ENCODE measurements at regions of chr5 and their contacts with region 1.

Region 1: DNA sequence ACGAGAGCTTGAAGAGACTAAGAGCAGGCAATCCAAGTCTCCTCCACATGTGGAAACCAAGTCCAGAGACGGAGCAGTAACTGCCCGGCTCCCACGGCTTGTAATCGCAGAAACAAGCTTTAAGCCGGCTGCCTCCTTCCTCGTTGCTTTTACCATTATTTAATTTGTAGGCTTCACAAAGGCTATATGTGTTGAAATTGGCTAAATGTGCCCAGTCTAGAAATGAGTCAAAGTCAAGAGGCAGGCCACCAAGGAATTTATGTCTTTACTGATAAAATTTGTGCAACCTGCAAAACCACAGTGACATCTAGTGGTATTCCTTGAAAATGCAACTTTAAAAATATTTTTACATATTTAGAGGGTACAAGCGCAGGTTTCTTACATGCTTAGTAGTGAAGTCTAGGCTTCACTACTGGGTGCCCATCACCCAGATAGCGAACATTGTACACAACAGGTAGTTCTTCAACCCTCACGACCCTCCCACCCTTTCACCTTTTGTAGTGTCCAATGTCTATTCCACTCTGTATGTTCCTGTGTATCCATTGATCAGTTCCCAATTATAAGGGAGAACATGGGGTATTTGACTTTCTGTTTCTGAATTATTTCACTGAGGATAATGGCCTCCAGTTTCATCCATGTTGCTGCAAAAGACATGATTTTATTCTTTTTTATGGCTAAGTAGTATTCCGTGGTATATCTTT is 33.5 kb upstream of the EBF1 start:
- DNase-seq: no peak
- ATAC-seq: peak; percentile 78 to 89

Region 2: DNA sequence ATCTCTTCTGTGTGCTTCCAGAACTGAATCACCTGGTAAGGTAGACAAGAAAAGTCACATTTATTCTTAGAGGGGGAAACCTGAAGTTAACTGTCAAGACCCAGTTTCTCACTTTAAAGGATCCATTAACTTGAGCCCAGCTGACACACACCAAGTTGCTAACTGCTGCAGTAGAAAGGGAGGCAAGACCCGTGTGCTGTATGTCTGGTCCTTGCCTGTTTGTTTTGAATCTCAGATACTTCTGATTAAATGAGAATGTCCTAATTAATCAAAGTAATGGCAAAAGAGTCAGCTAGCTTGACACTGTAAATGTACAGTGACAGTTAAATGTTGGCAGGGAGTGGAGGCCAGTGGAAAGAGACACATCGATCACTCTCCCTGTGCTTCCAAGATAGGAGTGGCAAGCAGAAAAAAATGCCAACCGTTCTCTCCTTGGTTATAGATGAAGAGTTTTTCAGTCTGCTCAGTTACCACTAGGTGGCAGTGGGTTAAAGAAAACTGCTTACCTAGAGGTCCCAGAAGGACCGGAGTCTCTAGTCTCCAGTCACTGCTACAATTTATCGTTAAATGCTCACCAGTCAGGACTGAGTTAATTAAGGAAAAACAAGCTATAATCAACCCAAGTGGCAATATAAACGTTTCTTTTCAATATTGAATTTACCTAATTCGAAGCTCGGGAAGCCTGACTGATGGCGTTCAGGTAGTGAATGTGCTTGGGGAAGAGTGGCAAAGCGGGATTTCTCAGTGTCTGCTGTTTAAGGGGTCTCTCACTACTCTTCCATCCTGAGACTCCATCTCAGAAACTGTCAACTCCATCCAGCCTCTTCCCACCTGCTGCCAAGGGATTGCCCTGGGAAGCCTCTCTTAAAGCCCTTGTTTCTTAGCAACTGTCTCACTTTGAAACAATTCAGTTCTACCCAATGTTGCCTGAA is 1371.2 kb before region 1 on chr5:
- intact Hi-C with region 1: loop called in 1 of 2 experiments (anchors 5 kb)
- DNase-seq: no peak
- ATAC-seq: peak; percentile 78 to 86

Region 3: DNA sequence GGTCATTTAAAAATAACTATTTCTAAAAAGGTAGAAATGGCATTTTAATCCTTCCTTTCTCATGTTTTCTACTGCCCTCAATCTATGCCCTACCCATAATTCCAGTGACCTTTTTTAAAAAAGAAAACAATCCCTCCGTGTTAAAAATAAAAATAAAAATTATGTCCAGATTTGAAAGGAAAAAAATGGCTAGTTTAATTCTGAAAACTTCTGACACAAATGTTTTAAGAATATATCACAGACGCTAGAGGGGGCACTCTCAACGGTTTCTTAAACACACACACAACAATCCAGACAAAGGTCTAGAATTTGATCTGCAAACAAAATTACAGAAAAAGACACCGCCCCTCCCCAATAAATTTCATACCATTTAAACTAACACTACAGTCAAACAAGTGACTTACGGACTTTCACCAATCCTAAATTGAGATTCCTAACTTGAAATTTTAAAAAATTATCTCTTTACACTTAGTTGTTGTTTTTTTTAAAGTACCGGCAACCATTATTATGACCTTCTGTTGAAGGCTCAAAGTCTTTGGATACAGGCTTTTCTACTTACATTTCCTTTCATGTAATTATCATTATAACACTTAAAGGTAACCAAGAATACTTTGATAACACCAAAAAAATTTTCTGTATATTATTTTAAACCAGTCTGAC is 1312.5 kb before region 1 on chr5:
- intact Hi-C with region 1: loop called in 1 of 2 experiments (anchors 10 kb)
- DNase-seq: no peak
- ATAC-seq: no peak

Region 4: GRCh38 chr5:158174918-158175851 is 958.0 kb before region 1 on chr5:
- intact Hi-C with region 1: loop called in 1 of 2 experiments (anchors 5 kb)
- DNase-seq: peak; percentile 73
- ATAC-seq: peak; percentile 89 to 93

Region 5: GRCh38 chr5:158695595-158696330 is 437.4 kb before region 1 on chr5:
- intact Hi-C with region 1: loop called in 1 of 2 experiments (anchors 10 kb)
- DNase-seq: peak; percentile 71
- ATAC-seq: peak; percentile 65 to 86

Region 6: DNA sequence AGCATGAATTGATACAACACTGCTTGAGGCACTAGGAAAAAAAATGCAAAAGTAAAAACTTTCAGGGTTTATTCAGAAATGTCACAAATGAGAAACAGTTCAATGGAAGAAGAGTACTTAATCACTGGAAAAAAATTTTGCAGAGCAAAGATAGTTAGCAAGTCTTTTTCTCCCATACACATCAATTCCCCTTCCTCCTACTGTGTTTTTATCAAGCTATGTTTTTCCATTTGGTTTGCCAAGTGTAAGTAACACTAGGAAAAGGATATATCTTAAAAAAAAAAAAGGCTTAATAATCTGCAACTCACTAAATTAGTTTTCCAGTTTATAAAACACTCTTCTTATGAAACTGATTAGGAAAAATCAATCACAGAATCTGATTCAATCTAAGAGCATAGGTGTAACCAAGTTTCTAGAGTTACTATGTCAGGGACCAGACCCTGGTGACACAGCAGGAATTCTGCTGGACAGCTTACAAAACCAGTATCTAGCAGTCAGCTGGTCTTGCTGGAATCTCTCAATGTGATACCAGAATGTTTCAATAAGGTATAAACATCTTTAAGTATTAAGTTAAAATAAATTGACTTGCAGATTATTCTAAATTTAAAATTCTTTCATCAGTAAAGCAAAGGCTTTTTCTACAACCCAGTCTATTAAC is 41.4 kb after region 1 on chr5:
- intact Hi-C with region 1: no loop called
- DNase-seq: no peak
- ATAC-seq: peak; percentile 45 to 53

Region 7: DNA sequence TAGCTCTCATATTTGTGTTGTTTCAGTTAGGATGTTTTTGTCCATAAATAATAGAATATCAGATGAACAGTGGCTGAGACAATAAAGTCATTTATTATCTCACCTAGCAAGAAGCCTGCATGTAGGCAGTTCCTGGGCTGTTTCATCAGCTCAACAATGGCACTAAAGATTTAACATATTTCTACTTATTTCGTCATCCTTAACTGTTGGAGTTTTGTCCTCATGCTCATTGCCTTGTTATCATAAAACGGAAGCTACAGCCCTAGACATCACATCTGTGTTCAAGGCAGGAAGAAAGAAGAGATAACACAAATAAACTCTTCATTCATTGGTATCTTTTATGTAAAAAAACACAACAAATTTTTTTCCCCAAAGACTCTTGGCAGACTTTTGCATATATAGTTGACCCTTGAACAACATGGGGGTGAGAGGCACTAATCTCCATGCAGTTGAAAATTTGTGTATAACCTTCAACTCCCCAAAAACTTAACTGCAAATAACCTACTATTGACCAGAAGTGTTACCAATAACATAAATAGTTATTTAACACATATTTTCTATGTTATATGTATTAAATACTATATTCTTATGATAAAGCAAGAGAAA is 505.9 kb after region 1 on chr5:
- intact Hi-C with region 1: no loop called
- DNase-seq: no peak
- ATAC-seq: no peak

Measured in left cardiac atrium (tissue), 4 donors.